ENCODE measurements at regions of chr14 and their contacts with region 1.

Region 1: GRCh38 chr14:46651526-46652144 is at the start of gene RPL10L:
- DNase-seq: peak; percentile 74
- ATAC-seq: peak; percentile 86
- H3K4me3 Mint-ChIP-seq: no peak within 1 kb of the TSS
- H3K27ac Mint-ChIP-seq: no peak within 1 kb of the TSS
- H3K4me1 Mint-ChIP-seq: no peaks in the 10 kb centered on the region
- H3K27me3 Mint-ChIP-seq: no peaks in the 10 kb centered on the region; the same call in 1 of the 2 replicates
- CTCF ChIP-seq: peak; percentile 70
- total RNA-seq, gene RPL10L: not detected in 3 replicates

Region 2: DNA sequence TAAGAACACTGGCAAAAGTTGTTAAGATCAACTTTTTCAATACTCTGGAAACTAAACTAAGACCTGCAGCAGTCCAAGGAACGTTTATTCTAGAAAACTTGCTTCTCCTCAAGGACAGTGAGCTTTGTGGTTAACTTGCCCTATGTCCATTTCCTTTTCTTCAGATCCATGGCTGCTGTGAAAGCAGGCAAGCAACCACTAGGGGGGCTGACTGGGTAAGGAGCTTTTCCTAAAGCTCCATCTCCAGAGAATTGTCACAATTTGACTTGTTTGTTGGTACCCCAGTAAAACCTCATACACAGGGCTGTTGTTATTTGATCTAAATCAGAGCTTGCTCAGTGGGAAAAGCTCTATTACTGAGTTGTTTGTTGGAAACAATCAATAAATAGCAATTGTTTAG is 10.1 kb after region 1 on chr14:
- CTCF ChIA-PET with region 1: interaction called, 12 read pairs
- POLR2A ChIA-PET with region 1: no interaction called
- DNase-seq: peak; percentile 23
- ATAC-seq: peak; percentile 51
- H3K4me3 Mint-ChIP-seq: no peak overlapping the region
- H3K27ac Mint-ChIP-seq: no peak overlapping the region
- H3K4me1 Mint-ChIP-seq: no peaks in the 10 kb centered on the region
- H3K27me3 Mint-ChIP-seq: no peaks in the 10 kb centered on the region
- CTCF ChIP-seq: no peak